ENCODE measurements at regions of chr20 and their contacts with region 1.

Region 1: GRCh38 chr20:44521484-44522481 is at the start of gene SERINC3:
- DNase-seq: peak; percentile 95
- H3K4me3 ChIP-seq: peak within 1 kb of the TSS; percentile 81 to 100
- H3K27ac ChIP-seq: peak within 1 kb of the TSS; percentile 97 to 100
- H3K4me1 ChIP-seq: peaks cover 8% of the 10 kb centered on the region
- H3K27me3 ChIP-seq: no peaks in the 10 kb centered on the region
- CTCF ChIP-seq: no peak
- POLR2A ChIP-seq: peak; percentile 91
- total RNA-seq, gene SERINC3: 89.1 to 141 TPM

Region 2: DNA sequence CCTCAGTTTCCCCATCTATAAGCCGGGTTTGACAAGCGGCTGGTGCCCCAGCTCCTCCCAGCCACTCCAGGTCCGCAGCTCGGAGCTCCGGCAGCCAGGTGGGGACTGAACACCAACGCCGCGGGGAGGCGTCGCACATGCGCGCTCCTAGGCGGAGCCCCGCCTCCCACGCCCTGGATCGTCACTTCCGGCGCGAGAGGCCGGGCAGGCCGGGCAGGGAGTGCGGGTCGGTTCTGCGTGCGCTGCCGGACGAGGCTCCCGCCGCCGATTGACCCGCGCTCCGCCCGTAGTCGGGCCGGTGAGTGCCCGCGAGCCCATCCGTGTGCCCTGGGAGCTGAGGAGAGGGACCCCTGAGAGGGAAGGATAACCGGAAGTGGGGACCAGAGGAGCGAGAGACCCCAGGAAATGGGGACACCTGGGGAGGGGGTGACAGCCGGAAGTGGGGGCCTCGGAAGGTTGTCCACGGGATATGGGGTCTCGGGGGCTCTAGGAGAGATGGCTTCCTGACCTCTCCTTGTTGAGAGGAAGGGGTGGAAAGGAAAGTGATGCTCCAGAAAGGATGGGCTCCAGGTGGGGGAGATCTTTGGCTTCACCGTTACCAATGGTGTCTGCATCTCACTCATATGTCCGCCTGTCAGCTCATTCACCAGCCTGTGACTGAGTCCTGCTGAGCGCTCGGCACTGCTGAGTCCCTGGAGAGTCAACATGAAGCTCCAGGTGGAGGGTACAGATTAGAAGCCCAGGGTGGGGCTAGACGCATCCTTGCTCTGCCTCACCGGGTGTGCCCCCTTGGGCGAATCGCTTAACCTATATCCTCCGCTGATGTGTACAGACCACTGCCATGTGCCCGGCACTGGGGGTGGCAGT is 45.9 kb before region 1 on chr20 and contains the start of gene TTPAL:
- intact Hi-C with region 1: loop called (anchors 2 kb)
- DNase-seq: peak; percentile 87
- H3K4me3 ChIP-seq: peak within 1 kb of the TSS; percentile 83 to 95
- H3K27ac ChIP-seq: peak within 1 kb of the TSS; percentile 90
- H3K4me1 ChIP-seq: no peaks in the 10 kb centered on the region
- H3K27me3 ChIP-seq: no peaks in the 10 kb centered on the region
- CTCF ChIP-seq: peak in 3 of 4 experiments; percentile 61 to 82 (median 78)
- POLR2A ChIP-seq: peak; percentile 97
- total RNA-seq, gene TTPAL: 11.8 to 14.8 TPM

Region 3: GRCh38 chr20:44586289-44586911 is 64.6 kb after region 1 on chr20:
- intact Hi-C with region 1: no loop called
- DNase-seq: no peak
- H3K4me3 ChIP-seq: no peak overlapping the region
- H3K27ac ChIP-seq: peak overlapping the region in 1 of 2 donors; percentile 2
- H3K4me1 ChIP-seq: no peaks in the 10 kb centered on the region
- H3K27me3 ChIP-seq: no peaks in the 10 kb centered on the region
- CTCF ChIP-seq: no peak
- POLR2A ChIP-seq: no peak

Region 4: DNA sequence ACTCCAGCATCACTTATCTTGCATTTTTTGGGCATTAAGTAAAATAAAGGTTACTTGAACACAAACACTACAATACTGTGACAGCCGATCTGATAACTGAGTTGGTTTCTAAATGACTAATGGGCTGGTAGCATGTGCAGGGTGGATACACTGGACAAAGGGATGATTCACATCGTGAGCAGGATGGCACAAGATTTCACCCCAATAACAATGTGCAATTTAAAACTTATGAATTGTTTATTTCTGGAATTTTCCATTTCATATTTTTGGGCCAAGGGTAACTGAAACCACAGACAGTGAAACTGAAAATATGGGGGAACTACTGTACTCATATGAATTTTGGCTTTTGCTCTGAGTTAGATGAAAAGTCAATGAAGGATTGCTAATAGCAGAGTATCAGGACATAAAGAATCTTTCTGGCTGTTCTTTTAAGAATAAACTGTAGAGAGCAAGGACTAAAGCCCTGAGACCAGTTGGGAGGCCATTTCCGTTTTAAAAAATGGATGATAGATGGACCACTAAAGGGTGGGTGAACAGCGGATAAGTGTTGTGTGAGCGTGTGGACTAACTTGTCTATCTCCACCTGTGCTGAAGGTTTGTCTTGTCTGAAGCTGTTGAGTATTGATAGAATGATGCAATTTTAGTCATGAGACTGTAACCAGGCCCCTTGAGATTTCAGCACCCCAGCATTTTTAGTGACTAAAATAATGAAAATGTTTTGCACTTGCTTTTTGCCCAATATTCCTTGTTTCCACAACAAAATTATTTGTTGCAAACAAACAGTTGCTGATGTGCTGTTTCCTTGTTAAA is 985.4 kb after region 1 on chr20:
- intact Hi-C with region 1: no loop called
- DNase-seq: no peak
- H3K4me3 ChIP-seq: no peak overlapping the region
- H3K27ac ChIP-seq: no peak overlapping the region
- H3K4me1 ChIP-seq: no peaks in the 10 kb centered on the region
- H3K27me3 ChIP-seq: peaks cover 2% of the 10 kb centered on the region
- CTCF ChIP-seq: no peak
- POLR2A ChIP-seq: no peak

Measured in prostate gland (tissue), 2 donors.